IMR-90 (cell line): ENCODE measurements at regions of chr5 and their contacts with region 1.

Region 1: GRCh38 chr5:102536323-102536928 is 37.6 kb upstream of the SLCO6A1 start:
- DNase-seq: peak; percentile 22
- ATAC-seq: no peak
- H3K4me3 ChIP-seq: no peak overlapping the region
- H3K27ac ChIP-seq: no peak overlapping the region
- H3K4me1 ChIP-seq: no peaks in the 10 kb centered on the region
- H3K27me3 ChIP-seq: 0 out of 2 replicates have a peak, but pooled peaks cover 1% of the 10 kb centered on the region
- CTCF ChIP-seq: peak; percentile 45
- POLR2A ChIP-seq: no peak
- RAD21 ChIP-seq: peak; percentile 51

Region 2: GRCh38 chr5:102691434-102691833 is 155.0 kb after region 1 on chr5:
- CTCF ChIA-PET with region 1: no interaction called
- POLR2A ChIA-PET with region 1: no interaction called
- dilution Hi-C with region 1: no loop called
- in situ Hi-C with region 1: no loop called
- intact Hi-C with region 1: no loop called
- DNase-seq: no peak
- ATAC-seq: no peak
- H3K4me3 ChIP-seq: no peak overlapping the region
- H3K27ac ChIP-seq: no peak overlapping the region
- H3K4me1 ChIP-seq: no peaks in the 10 kb centered on the region
- H3K27me3 ChIP-seq: no peaks in the 10 kb centered on the region; the same call in 1 of the 2 replicates
- CTCF ChIP-seq: no peak
- POLR2A ChIP-seq: no peak
- RAD21 ChIP-seq: no peak

Region 3: GRCh38 chr5:103139264-103139865 is 602.9 kb after region 1 on chr5:
- CTCF ChIA-PET with region 1: no interaction called
- POLR2A ChIA-PET with region 1: no interaction called
- dilution Hi-C with region 1: no loop called
- in situ Hi-C with region 1: no loop called
- intact Hi-C with region 1: loop called (anchors 5 kb)
- DNase-seq: peak; percentile 68
- ATAC-seq: peak; percentile 97
- H3K4me3 ChIP-seq: no peak overlapping the region
- H3K27ac ChIP-seq: no peak overlapping the region
- H3K4me1 ChIP-seq: no peaks in the 10 kb centered on the region
- H3K27me3 ChIP-seq: no peaks in the 10 kb centered on the region
- CTCF ChIP-seq: peak; percentile 91
- POLR2A ChIP-seq: no peak
- RAD21 ChIP-seq: peak; percentile 95

Region 4: DNA sequence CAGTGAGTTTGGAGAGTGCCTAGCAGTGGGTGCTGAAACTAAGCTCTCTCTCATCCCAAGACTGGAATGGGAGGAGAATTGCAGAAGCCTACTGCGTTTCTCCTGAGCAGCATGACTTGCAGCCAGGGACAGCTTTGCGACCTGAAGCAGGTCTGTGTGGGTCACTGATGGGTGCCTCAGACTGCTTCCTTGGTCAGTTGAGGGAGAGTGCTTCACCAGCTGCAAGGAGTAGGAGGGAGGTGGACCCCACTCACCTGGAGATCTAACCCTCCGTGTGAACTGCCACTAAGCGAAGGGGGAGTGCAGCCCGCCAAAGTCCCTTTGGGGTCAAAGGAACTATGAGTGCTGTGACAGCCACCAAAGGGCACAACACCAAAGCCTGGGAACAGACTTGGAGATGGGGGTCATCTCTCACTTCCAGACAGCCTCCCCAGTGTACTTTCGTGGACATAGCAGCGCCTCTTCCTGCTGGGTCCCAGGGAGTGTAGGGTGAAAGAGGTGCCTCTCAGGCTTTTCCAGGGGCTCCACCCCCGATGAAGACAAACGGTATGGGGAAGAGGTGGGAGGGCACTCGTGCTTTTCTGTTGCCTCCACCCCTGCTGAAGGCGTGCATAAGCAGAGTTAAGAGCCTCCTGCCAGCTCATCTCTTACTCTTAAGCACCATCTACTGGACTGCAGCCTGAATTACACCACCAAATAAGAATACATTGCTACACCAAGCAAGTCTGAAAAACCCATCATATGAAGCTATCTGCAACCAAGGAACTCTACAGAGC is 687.9 kb after region 1 on chr5:
- CTCF ChIA-PET with region 1: no interaction called
- POLR2A ChIA-PET with region 1: no interaction called
- dilution Hi-C with region 1: no loop called
- in situ Hi-C with region 1: no loop called
- intact Hi-C with region 1: loop called (anchors 1 kb)
- DNase-seq: peak; percentile 75
- ATAC-seq: peak; percentile 100
- H3K4me3 ChIP-seq: no peak overlapping the region
- H3K27ac ChIP-seq: no peak overlapping the region
- H3K4me1 ChIP-seq: no peaks in the 10 kb centered on the region
- H3K27me3 ChIP-seq: no peaks in the 10 kb centered on the region
- CTCF ChIP-seq: peak; percentile 78
- POLR2A ChIP-seq: no peak
- RAD21 ChIP-seq: peak; percentile 75